PC-3 (cell line): ENCODE measurements at regions of chr4 and their contacts with region 1.

Region 1: GRCh38 chr4:74623041-74623440 is 171.3 kb downstream of the BTC start:
- DNase-seq: peak; percentile 77
- ATAC-seq: peak; percentile 6; the same call in 1 of the 2 replicates
- H3K4me3 ChIP-seq: no peak overlapping the region
- H3K27ac ChIP-seq: peak overlapping the region; percentile 100
- H3K4me1 ChIP-seq: peaks cover 92% of the 10 kb centered on the region
- H3K27me3 ChIP-seq: no peaks in the 10 kb centered on the region
- CTCF ChIP-seq: peak; percentile 78

Region 2: GRCh38 chr4:74320559-74321118 is 302.4 kb before region 1 on chr4:
- CTCF ChIA-PET with region 1: no interaction called
- POLR2A ChIA-PET with region 1: no interaction called
- intact Hi-C with region 1: loop called (anchors 2 kb)
- DNase-seq: peak; percentile 95
- ATAC-seq: peak; percentile 90
- H3K4me3 ChIP-seq: peak overlapping the region; percentile 15; the same call in 1 of the 2 replicates
- H3K27ac ChIP-seq: peak overlapping the region; percentile 95
- H3K4me1 ChIP-seq: peaks cover 28% of the 10 kb centered on the region
- H3K27me3 ChIP-seq: no peaks in the 10 kb centered on the region
- CTCF ChIP-seq: peak; percentile 78

Region 3: DNA sequence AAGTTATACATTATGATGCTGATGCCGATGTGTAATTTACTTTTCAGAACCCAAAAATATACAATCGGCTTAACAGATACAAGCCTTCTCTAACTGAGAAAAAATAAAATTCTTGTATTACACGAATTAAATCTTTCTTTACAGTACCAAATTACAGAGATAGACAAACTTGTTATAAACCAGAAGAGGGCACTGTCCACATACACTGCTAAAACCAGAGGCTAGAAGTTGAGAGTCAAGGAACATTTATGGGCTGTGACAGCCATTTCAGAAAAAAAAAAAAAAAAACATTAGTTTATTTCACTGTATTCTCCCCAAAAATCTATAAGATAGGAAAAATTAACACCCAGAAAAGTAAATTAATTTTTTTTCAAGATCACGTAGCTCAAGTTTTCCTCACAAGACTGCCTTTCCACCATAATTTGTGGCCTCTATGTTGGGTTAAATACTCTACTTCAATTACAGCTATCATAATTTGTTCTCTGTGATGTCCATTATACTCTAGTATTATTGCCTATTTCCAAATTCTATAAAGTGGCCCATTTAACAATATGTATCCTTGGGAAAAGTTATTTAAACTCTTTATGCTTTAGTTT is 246.1 kb before region 1 on chr4:
- CTCF ChIA-PET with region 1: no interaction called
- POLR2A ChIA-PET with region 1: no interaction called
- intact Hi-C with region 1: loop called (anchors 1 kb)
- DNase-seq: peak; percentile 60
- ATAC-seq: peak; percentile 14; the same call in 1 of the 2 replicates
- H3K4me3 ChIP-seq: peak overlapping the region; percentile 56
- H3K27ac ChIP-seq: peak overlapping the region; percentile 100
- H3K4me1 ChIP-seq: peaks cover 40% of the 10 kb centered on the region
- H3K27me3 ChIP-seq: no peaks in the 10 kb centered on the region
- CTCF ChIP-seq: peak; percentile 71

Region 4: DNA sequence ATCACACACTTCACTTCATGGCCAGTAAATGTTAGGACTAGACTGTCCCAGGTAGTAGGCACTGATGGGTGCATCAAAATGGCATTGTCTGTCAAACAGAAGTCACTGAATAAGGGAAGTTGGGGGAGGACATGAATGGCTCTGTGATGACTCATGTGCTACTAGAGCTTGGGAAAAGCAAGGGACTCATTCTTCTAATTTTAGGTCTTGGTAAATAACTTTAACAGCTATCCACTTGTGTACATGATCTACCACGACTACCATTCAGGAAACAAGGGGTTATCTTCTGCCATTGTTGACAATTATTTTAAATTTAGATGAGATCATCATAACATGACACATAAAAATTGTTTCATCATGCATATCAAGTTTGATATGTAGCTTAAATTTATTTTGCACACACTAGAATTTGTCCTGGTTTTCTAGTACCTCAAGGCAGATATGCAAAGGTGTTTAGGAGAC is 171.8 kb before region 1 on chr4:
- CTCF ChIA-PET with region 1: no interaction called
- POLR2A ChIA-PET with region 1: no interaction called
- intact Hi-C with region 1: loop called (anchors 2 kb)
- DNase-seq: peak; percentile 85
- ATAC-seq: peak; percentile 37
- H3K4me3 ChIP-seq: peak overlapping the region; percentile 76; the same call in 1 of the 2 replicates
- H3K27ac ChIP-seq: peak overlapping the region; percentile 80
- H3K4me1 ChIP-seq: peaks cover 88% of the 10 kb centered on the region
- H3K27me3 ChIP-seq: no peaks in the 10 kb centered on the region
- CTCF ChIP-seq: no peak

Region 5: DNA sequence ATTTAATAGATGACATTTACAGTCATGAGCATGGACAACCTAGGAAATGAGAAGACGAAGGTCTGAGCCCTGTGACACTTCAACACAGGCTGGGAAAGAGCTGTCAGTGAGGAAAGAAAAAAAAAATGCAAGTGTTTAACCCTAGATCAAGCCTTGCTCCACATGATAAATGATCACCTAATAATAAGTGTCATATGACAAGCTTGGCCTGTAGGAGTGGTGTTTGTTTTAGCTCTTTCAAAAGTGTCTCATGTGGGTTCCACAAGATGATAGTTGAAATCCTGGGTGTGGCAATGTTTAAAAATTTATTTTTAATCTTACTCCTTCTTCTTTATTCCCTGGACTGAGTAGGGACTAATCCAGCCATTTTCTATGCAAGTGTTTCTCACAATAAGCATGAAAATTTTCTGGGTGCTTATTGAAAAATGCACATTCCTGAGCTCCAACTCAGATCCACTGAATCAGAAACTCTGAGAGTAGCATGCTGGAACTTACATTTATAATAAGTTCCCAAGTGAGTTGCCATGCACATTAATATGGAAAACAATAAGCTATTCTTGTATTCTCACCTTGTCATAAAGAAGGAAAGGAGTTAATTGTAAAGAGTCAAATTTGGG is 39.9 kb before region 1 on chr4:
- CTCF ChIA-PET with region 1: no interaction called
- POLR2A ChIA-PET with region 1: interaction called, 11 read pairs
- intact Hi-C with region 1: no loop called
- DNase-seq: peak; percentile 5
- ATAC-seq: peak; percentile 38
- H3K4me3 ChIP-seq: no peak overlapping the region
- H3K27ac ChIP-seq: no peak overlapping the region; the same call in 1 of the 2 replicates
- H3K4me1 ChIP-seq: peaks cover 8% of the 10 kb centered on the region
- H3K27me3 ChIP-seq: no peaks in the 10 kb centered on the region
- CTCF ChIP-seq: no peak

Region 6: DNA sequence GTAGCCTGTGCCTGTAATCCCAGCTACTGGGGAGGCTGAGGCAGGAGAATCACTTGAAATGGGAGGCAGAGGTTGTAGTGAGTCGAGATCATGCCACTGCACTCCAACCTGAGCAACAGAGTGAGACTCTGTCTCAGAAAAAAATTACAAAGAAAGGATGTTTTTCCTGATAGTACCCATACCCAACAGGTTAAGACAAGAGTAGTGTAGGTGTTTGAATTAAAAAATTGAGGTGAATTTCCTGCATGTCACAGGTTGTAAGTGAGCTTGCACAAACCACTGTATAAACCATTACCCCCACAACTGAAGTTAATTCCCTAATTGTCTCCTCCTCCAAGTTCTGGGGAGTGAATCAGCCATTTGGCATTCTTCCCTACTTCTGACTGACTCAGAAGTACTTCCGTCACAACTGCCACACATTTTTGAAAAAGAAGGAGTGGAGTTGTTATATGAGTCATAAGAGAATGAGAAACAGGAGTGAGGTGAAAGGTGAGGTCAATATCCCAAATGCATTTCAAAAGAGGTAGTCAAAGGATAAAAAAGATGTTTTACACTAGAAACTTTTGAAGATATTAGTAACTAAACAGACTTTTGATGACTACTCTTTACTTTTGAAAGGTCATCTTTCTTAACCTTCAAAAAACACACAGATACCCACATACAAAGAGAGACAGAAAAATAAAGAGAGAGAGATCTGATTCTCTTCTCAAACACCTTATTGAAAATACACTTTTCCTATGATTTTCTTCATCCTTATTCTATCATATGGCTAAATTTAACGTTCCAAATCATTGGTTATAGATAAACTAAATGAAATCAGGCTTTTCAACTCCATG is 36.8 kb after region 1 on chr4:
- CTCF ChIA-PET with region 1: interaction called, 3 read pairs
- POLR2A ChIA-PET with region 1: no interaction called
- intact Hi-C with region 1: loop called (anchors 1 kb)
- DNase-seq: peak; percentile 98
- ATAC-seq: peak; percentile 60
- H3K4me3 ChIP-seq: no peak overlapping the region
- H3K27ac ChIP-seq: peak overlapping the region; percentile 99
- H3K4me1 ChIP-seq: peaks cover 78% of the 10 kb centered on the region
- H3K27me3 ChIP-seq: no peaks in the 10 kb centered on the region
- CTCF ChIP-seq: no peak